Caco-2 (cell line): ENCODE measurements at regions of chr6 and their contacts with region 1.

Region 1: GRCh38 chr6:158322724-158323560 is 10.7 kb downstream of the TULP4 start:
- DNase-seq: peak; percentile 72
- H3K4me3 ChIP-seq: no peak overlapping the region
- H3K4me3 Mint-ChIP-seq: peak overlapping the region; percentile 39
- H3K27ac Mint-ChIP-seq: peak overlapping the region; percentile 74
- H3K4me1 ChIP-seq: peaks cover 35% of the 10 kb centered on the region
- H3K4me1 Mint-ChIP-seq: peaks cover 50% of the 10 kb centered on the region
- H3K27me3 ChIP-seq: no peaks in the 10 kb centered on the region
- H3K27me3 Mint-ChIP-seq: no peaks in the 10 kb centered on the region
- CTCF ChIP-seq: no peak

Region 2: GRCh38 chr6:158290659-158291058 is 32.3 kb before region 1 on chr6:
- CTCF ChIA-PET with region 1: no interaction called
- POLR2A ChIA-PET with region 1: no interaction called
- intact Hi-C with region 1: no loop called
- DNase-seq: no peak
- H3K4me3 ChIP-seq: no peak overlapping the region
- H3K4me3 Mint-ChIP-seq: no peak overlapping the region
- H3K27ac Mint-ChIP-seq: peak overlapping the region; percentile 40
- H3K4me1 ChIP-seq: peaks cover 29% of the 10 kb centered on the region
- H3K4me1 Mint-ChIP-seq: peaks cover 43% of the 10 kb centered on the region
- H3K27me3 ChIP-seq: no peaks in the 10 kb centered on the region
- H3K27me3 Mint-ChIP-seq: no peaks in the 10 kb centered on the region
- CTCF ChIP-seq: no peak

Region 3: GRCh38 chr6:158303210-158303731 is 19.7 kb before region 1 on chr6:
- CTCF ChIA-PET with region 1: no interaction called
- POLR2A ChIA-PET with region 1: no interaction called
- intact Hi-C with region 1: loop called (anchors 1 kb)
- DNase-seq: peak; percentile 71 to 84
- H3K4me3 ChIP-seq: peak overlapping the region; percentile 24; the same call in 1 of the 2 replicates
- H3K4me3 Mint-ChIP-seq: peak overlapping the region; percentile 56
- H3K27ac Mint-ChIP-seq: peak overlapping the region; percentile 78
- H3K4me1 ChIP-seq: peaks cover 29% of the 10 kb centered on the region
- H3K4me1 Mint-ChIP-seq: peaks cover 12% of the 10 kb centered on the region
- H3K27me3 ChIP-seq: no peaks in the 10 kb centered on the region
- H3K27me3 Mint-ChIP-seq: no peaks in the 10 kb centered on the region
- CTCF ChIP-seq: no peak

Region 4: GRCh38 chr6:158338311-158339112 is 15.6 kb after region 1 on chr6:
- CTCF ChIA-PET with region 1: no interaction called
- POLR2A ChIA-PET with region 1: no interaction called
- intact Hi-C with region 1: loop called (anchors 1 kb)
- DNase-seq: no peak
- H3K4me3 ChIP-seq: no peak overlapping the region
- H3K4me3 Mint-ChIP-seq: peak overlapping the region; percentile 2
- H3K27ac Mint-ChIP-seq: peak overlapping the region; percentile 72
- H3K4me1 ChIP-seq: peaks cover 27% of the 10 kb centered on the region
- H3K4me1 Mint-ChIP-seq: peaks cover 30% of the 10 kb centered on the region
- H3K27me3 ChIP-seq: no peaks in the 10 kb centered on the region
- H3K27me3 Mint-ChIP-seq: no peaks in the 10 kb centered on the region
- CTCF ChIP-seq: no peak

Region 5: GRCh38 chr6:158357566-158358216 is 34.7 kb after region 1 on chr6:
- CTCF ChIA-PET with region 1: no interaction called
- POLR2A ChIA-PET with region 1: no interaction called
- intact Hi-C with region 1: no loop called
- DNase-seq: no peak
- H3K4me3 ChIP-seq: no peak overlapping the region
- H3K4me3 Mint-ChIP-seq: no peak overlapping the region
- H3K27ac Mint-ChIP-seq: no peak overlapping the region
- H3K4me1 ChIP-seq: 0 out of 2 replicates have a peak, but pooled peaks cover 4% of the 10 kb centered on the region
- H3K4me1 Mint-ChIP-seq: peaks cover 25% of the 10 kb centered on the region
- H3K27me3 ChIP-seq: no peaks in the 10 kb centered on the region
- H3K27me3 Mint-ChIP-seq: no peaks in the 10 kb centered on the region
- CTCF ChIP-seq: no peak